ENCODE measurements at regions of chr1 and their contacts with region 1.

Region 1: GRCh38 chr1:212613455-212614390 is 5.2 kb downstream of the ATF3 start:
- DNase-seq: no peak
- ATAC-seq: no peak
- H3K4me3 Mint-ChIP-seq: no peak overlapping the region
- H3K27ac Mint-ChIP-seq: no peak overlapping the region
- H3K4me1 Mint-ChIP-seq: peaks cover 53% of the 10 kb centered on the region
- H3K27me3 Mint-ChIP-seq: peaks cover 19% of the 10 kb centered on the region
- CTCF ChIP-seq: no peak

Region 2: GRCh38 chr1:212630158-212630900 is 16.6 kb after region 1 on chr1:
- CTCF ChIA-PET with region 1: interaction called, 17 read pairs
- POLR2A ChIA-PET with region 1: no interaction called
- DNase-seq: peak; percentile 73
- ATAC-seq: peak; percentile 99
- H3K4me3 Mint-ChIP-seq: no peak overlapping the region
- H3K27ac Mint-ChIP-seq: no peak overlapping the region
- H3K4me1 Mint-ChIP-seq: no peaks in the 10 kb centered on the region
- H3K27me3 Mint-ChIP-seq: peaks cover 4% of the 10 kb centered on the region
- CTCF ChIP-seq: peak; percentile 87

Region 3: GRCh38 chr1:212712451-212713303 is 99.0 kb after region 1 on chr1:
- CTCF ChIA-PET with region 1: no interaction called
- POLR2A ChIA-PET with region 1: no interaction called
- DNase-seq: no peak
- ATAC-seq: no peak
- H3K4me3 Mint-ChIP-seq: no peak overlapping the region
- H3K27ac Mint-ChIP-seq: no peak overlapping the region
- H3K4me1 Mint-ChIP-seq: peaks cover 4% of the 10 kb centered on the region
- H3K27me3 Mint-ChIP-seq: peaks cover 5% of the 10 kb centered on the region
- CTCF ChIP-seq: no peak